ENCODE measurements at regions of chr11 and their contacts with region 1.

Region 1: DNA sequence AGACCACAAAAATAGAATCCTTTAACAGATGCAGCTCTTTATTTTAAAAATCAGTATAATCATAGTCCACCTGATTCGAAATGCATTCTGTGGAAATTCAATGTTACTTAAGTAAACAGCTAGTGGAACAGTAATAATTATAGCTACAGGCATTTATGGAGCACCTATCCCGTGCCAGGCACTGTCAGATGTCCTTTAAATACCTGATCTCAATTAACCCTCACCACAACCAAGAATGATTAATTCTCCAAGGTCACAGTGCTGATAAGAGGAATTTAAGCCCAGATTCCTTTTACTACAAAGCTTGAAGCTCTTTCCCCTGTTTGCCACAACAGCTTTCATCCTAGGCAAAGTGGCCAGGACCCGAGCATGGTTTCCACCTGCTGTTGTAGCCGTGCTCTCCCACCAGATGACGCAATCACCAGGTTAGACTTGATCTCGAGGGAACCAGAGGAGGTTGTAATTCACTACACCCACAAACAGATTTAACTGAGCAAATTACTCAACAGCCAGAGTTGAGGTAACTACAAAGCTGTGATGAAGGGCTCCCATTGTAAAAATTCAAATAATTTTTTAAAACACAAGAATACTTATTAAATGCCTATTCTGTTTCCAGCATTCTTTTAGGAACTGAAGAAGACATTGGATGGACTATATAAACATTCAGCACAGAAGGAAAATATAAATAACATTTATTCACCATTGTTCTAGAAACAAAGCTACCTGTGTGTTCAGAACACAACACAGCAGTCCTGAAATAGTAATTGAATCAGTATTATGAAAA is 10.3 kb downstream of the PRDM10 start:
- DNase-seq: peak in 1 of 2 experiments; percentile 56
- H3K4me3 ChIP-seq: no peak overlapping the region
- H3K27ac ChIP-seq: no peak overlapping the region
- H3K4me1 ChIP-seq: peaks cover 0 to 2% (median 0%) of the 10 kb centered on the region in 4 experiments; a peak in 2 of 7 replicates
- H3K27me3 ChIP-seq: peaks cover 0 to 2% (median 0%) of the 10 kb centered on the region in 4 experiments; a peak in 1 of 7 replicates
- CTCF ChIP-seq: peak; percentile 68 to 80 (median 69)
- EP300 ChIP-seq: no peak
- POLR2A ChIP-seq: no peak
- RAD21 ChIP-seq: peak; percentile 72 to 77

Region 2: DNA sequence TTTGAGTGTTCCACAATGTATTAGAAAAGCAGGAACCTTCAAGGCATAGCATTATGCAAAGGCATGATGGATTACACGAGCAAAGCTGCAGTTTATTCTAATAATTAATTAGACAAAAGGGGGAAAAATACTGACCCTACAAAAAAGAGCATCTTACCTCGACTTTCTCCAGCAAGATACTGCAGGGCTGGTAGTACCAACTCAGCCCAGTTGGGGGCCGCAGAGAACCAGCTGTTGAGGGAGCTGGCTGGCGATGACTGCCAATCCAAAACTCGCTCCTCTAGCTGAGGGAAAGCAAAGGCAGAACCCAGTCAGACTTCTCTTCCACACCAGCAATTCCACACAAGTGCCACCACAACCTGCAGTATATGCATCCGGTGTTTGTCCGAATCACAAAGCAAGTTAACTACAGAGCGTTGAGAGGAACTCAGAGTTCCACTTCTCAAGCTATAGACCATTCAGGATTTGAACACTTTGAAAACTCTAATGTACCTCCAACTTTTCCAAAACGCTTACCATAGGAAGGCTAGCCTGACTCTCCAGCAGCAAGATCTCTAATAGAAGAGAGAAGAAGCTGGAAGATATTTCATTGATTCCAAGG is 110.7 kb before region 1 on chr11:
- CTCF ChIA-PET with region 1: no interaction called
- POLR2A ChIA-PET with region 1: no interaction called
- DNase-seq: peak in 1 of 2 experiments; percentile 79
- H3K4me3 ChIP-seq: no peak overlapping the region
- H3K27ac ChIP-seq: no peak overlapping the region
- H3K4me1 ChIP-seq: no peaks in the 10 kb centered on the region
- H3K27me3 ChIP-seq: no peaks in the 10 kb centered on the region
- CTCF ChIP-seq: peak; percentile 53 to 78 (median 64)
- EP300 ChIP-seq: no peak
- POLR2A ChIP-seq: no peak
- RAD21 ChIP-seq: peak; percentile 59 to 69

Region 3: GRCh38 chr11:129973068-129973467 is 19.3 kb before region 1 on chr11:
- CTCF ChIA-PET with region 1: interaction called, 11 read pairs
- POLR2A ChIA-PET with region 1: interaction called, 4 read pairs
- DNase-seq: no peak
- H3K4me3 ChIP-seq: no peak overlapping the region
- H3K27ac ChIP-seq: no peak overlapping the region
- H3K4me1 ChIP-seq: no peaks in the 10 kb centered on the region; a peak in 1 of 7 replicates
- H3K27me3 ChIP-seq: no peaks in the 10 kb centered on the region
- CTCF ChIP-seq: no peak
- EP300 ChIP-seq: no peak
- POLR2A ChIP-seq: no peak
- RAD21 ChIP-seq: no peak

Region 4: DNA sequence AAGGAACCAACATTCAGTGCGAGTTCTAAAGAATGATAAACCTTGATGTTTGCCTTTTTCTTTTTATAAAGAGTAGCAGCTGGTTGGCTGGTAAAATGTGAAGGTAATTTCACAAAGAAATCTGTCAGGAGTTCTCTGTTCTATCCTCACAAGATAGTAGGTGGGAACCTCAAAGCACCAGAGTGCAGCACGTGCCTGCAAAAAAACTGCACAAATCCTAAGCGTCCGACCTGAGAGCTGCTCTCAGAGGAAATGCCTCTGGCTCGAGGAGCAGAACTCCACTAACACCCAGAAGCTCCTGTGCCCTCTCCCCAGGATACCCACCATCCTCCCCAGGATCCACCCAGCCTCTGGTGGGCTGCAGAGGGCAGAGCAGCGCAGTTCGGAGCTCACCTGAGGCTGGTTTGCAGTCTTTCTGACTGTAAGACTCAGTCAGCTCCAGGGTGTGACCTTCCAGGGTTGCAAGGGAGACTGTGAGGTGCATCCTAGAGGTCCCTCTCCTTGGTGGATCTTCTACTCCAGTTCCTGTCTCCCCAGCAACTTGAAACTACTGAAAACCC is 13.2 kb before region 1 on chr11:
- CTCF ChIA-PET with region 1: interaction called, 16 read pairs
- POLR2A ChIA-PET with region 1: interaction called, 5 read pairs
- DNase-seq: no peak
- H3K4me3 ChIP-seq: no peak overlapping the region
- H3K27ac ChIP-seq: no peak overlapping the region
- H3K4me1 ChIP-seq: no peaks in the 10 kb centered on the region
- H3K27me3 ChIP-seq: no peaks in the 10 kb centered on the region
- CTCF ChIP-seq: no peak
- EP300 ChIP-seq: no peak
- POLR2A ChIP-seq: no peak
- RAD21 ChIP-seq: 0 out of 4 replicates have a peak, but pooled peaks of 1 of the 2 experiments have one; percentile 6

Region 5: DNA sequence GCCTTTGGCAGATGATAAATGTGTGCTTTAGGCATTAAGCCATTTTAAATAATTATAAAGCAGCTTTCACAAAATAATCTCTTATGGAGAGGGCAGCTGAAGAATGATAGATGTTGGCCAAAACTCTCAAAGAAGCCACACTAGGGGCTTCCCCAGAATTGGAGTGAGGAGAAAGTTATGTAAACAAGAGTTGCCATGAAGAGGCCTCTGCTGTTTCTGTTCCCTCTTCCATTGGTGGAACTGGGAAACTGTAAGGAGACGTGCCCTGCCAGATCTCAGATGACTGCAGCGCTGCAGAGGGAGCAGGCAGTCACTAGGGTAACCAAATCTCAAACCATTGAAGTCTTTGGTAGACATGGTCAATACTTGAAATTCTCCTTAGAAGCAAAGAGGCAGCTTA is 57.9 kb after region 1 on chr11:
- CTCF ChIA-PET with region 1: no interaction called
- POLR2A ChIA-PET with region 1: no interaction called
- DNase-seq: no peak
- H3K4me3 ChIP-seq: no peak overlapping the region
- H3K27ac ChIP-seq: no peak overlapping the region
- H3K4me1 ChIP-seq: peaks cover 0 to 2% (median 0%) of the 10 kb centered on the region in 4 experiments; a peak in 1 of 7 replicates
- H3K27me3 ChIP-seq: no peaks in the 10 kb centered on the region
- CTCF ChIP-seq: no peak
- EP300 ChIP-seq: no peak
- POLR2A ChIP-seq: no peak
- RAD21 ChIP-seq: no peak

Region 6: GRCh38 chr11:130087294-130087926 is 95.1 kb after region 1 on chr11:
- CTCF ChIA-PET with region 1: no interaction called
- POLR2A ChIA-PET with region 1: no interaction called
- DNase-seq: no peak
- H3K4me3 ChIP-seq: no peak overlapping the region
- H3K27ac ChIP-seq: no peak overlapping the region
- H3K4me1 ChIP-seq: peaks cover 0 to 10% (median 3%) of the 10 kb centered on the region in 4 experiments; a peak in 3 of 7 replicates
- H3K27me3 ChIP-seq: no peaks in the 10 kb centered on the region
- CTCF ChIP-seq: no peak
- EP300 ChIP-seq: no peak
- POLR2A ChIP-seq: no peak
- RAD21 ChIP-seq: no peak

Measured in H1 (cell line).